Sigmoid colon (tissue), 7 donors: ENCODE measurements at regions of chr9 and their contacts with region 1.

Region 1: GRCh38 chr9:16705121-16705604 is 165.3 kb downstream of the BNC2 start:
- DNase-seq: peak; percentile 93
- H3K4me3 ChIP-seq: peak overlapping the region; percentile 29 to 47 (median 38)
- H3K27ac ChIP-seq: peak overlapping the region; percentile 81 to 92 (median 92)
- H3K4me1 ChIP-seq: peaks cover 0 to 81% (median 66%) of the 10 kb centered on the region in 4 donors
- H3K27me3 ChIP-seq: no peaks in the 10 kb centered on the region
- CTCF ChIP-seq: no peak
- EP300 ChIP-seq: peak in 3 of 4 donors; percentile 16 to 57 (median 33)
- POLR2A ChIP-seq: no peak

Region 2: DNA sequence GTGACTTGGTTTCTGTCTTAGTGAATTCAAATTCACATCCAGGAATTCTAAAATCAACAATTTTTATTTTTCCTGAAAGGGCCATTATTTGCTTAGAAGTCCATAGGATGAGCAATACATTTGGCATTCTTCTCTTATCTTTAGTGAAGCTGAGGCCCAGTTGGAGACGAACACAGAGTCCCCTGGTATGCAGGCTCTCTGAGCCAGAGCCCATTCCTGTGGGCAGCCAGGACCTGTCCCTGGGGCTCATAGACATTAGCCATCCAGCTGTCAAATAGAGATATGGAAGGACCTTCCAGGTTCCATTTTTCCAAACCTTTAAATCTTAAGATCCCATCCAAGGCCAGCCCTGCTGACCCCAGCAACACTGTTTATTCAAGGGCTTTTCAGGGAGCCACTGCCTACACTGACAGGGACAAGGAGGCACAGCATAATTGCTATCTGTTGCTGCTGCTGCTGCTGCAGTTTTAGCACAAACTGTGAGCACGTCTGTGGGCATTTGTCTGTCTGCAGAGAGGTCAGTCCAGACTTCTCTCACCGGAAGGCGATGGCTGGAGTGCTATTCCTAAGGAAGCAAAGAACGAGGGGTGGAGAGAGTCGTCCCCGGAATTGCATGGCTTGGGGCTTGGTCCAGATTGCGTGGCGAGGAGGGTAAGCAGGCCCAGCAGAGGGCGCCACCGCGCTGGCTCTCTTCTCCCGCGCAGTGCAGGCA is 513.3 kb before region 1 on chr9:
- intact Hi-C with region 1: loop called (anchors 5 kb)
- DNase-seq: peak; percentile 89
- H3K4me3 ChIP-seq: peak overlapping the region in 1 of 4 donors; percentile 8
- H3K27ac ChIP-seq: peak overlapping the region in 3 of 4 donors; percentile 27 to 70 (median 60)
- H3K4me1 ChIP-seq: peaks cover 0 to 39% (median 22%) of the 10 kb centered on the region in 4 donors
- H3K27me3 ChIP-seq: no peaks in the 10 kb centered on the region
- CTCF ChIP-seq: peak; percentile 65 to 85 (median 78)
- EP300 ChIP-seq: no peak
- POLR2A ChIP-seq: no peak

Region 3: DNA sequence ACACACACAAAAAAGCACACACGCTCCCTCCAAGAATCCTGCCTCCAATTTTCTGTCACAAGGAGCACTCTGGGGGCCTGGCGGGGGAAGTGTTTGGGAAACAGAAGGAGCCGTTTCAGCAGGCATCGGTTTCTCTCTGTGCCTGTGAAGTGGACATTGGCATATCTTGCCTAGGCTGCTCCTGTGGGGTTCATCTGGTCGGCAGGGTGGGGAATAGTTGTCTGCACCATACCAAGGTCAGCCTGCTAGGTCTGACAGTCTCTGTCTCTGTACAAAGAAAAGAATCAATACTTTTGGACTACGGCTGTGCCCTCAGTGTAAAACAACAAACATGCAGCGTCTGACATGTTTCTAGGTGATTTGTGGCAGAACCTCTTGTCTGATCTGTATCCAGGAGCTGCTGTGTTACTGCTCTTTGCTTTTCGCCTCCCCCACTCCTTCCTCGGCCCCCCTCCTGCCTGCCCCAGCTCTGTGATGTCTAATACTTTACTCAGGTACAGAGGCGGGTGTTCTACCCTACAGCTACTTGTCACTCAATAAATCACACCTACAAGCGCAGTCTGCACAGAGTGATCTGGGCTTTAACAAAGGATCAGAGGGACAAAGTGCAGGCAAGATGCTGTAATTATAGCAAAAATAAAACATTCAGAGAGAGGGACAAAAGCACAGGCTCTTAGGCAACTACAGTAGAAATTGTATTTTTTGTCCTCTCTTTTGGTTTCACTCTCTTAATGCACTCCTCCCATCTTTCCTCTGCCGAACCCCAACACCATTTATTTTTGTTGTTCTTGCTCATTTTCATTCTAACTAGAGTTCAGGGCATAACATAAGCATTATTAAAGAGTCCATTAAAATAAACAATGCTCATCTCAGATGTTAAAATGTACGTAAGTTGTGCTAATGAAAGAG is 51.4 kb before region 1 on chr9:
- intact Hi-C with region 1: loop called (anchors 2 kb)
- DNase-seq: peak; percentile 76
- H3K4me3 ChIP-seq: peak overlapping the region; percentile 5 to 37 (median 34)
- H3K27ac ChIP-seq: peak overlapping the region; percentile 7 to 83 (median 80)
- H3K4me1 ChIP-seq: peaks cover 0 to 76% (median 54%) of the 10 kb centered on the region in 4 donors
- H3K27me3 ChIP-seq: no peaks in the 10 kb centered on the region
- CTCF ChIP-seq: no peak
- EP300 ChIP-seq: no peak
- POLR2A ChIP-seq: no peak

Region 4: DNA sequence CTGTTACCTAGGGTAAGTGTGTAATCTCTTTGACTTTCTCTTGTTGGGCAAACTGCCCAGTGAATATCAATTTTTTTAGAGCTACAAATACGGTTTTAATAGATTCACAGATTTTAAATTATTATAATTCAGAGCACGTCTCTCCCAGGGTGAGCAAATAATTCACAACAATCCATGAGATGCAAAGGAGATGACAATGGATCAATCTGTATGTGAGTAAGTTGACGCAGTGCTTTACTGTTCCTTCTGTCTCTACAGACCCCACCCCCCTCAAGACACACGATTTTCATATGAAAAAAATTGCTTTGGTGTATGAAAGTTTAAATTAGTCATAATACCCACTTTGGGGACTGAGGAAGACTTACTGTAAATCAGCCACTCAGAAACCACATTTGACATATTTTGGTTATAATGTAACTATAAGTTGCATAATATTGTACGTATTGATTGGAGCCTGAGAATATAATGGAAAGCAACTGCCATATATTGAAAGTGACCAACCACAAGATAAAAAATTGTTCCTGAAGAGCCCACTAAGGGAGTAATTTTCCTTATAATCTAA is 36.3 kb before region 1 on chr9:
- intact Hi-C with region 1: loop called (anchors 5 kb)
- DNase-seq: no peak
- H3K4me3 ChIP-seq: no peak overlapping the region
- H3K27ac ChIP-seq: no peak overlapping the region
- H3K4me1 ChIP-seq: peaks cover 0 to 57% (median 30%) of the 10 kb centered on the region in 4 donors
- H3K27me3 ChIP-seq: no peaks in the 10 kb centered on the region
- CTCF ChIP-seq: no peak
- EP300 ChIP-seq: no peak
- POLR2A ChIP-seq: no peak

Region 5: GRCh38 chr9:16679327-16679821 is 25.8 kb before region 1 on chr9:
- intact Hi-C with region 1: no loop called
- DNase-seq: no peak
- H3K4me3 ChIP-seq: no peak overlapping the region
- H3K27ac ChIP-seq: peak overlapping the region in 3 of 4 donors; percentile 7 to 63 (median 52)
- H3K4me1 ChIP-seq: peaks cover 0 to 56% (median 50%) of the 10 kb centered on the region in 4 donors
- H3K27me3 ChIP-seq: no peaks in the 10 kb centered on the region
- CTCF ChIP-seq: no peak
- EP300 ChIP-seq: no peak
- POLR2A ChIP-seq: no peak

Region 6: GRCh38 chr9:16763946-16764345 is 58.8 kb after region 1 on chr9:
- intact Hi-C with region 1: no loop called
- DNase-seq: no peak
- H3K4me3 ChIP-seq: no peak overlapping the region
- H3K27ac ChIP-seq: no peak overlapping the region
- H3K4me1 ChIP-seq: peaks cover 0 to 12% (median 3%) of the 10 kb centered on the region in 4 donors
- H3K27me3 ChIP-seq: no peaks in the 10 kb centered on the region
- CTCF ChIP-seq: no peak
- EP300 ChIP-seq: no peak
- POLR2A ChIP-seq: no peak